ENCODE measurements at regions of chr14 and their contacts with region 1.

Region 1: DNA sequence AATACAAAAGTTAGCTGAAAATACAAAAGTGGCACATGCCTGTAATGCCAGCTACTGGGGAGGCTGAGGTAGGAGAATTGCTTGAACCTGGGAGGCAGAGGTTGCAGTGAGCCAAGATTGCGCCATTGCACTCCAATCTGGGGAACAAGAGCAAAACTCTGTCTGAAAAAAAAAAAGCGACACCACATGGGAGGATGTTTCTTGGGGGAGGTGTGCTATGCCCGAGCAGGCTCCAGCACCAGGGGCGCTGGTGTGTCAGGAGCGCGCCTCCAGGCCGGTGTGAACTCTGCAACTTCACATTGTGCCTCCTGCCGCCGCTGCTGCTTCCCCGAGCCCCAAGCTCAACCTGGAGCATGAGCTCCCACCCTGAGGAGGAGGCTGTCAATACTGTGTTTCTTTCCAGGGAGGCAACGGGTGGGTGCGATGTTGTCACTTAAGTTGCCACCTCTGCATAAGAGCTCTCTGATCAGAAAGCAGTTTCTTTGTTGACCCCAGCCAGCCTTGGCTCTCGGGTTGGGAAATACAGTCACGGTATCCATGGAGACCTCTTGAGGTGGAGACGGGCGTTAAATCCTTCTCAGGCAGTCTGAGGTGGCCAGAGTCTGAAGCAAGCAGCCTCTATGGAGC is 18.9 kb downstream of the DEGS2 start:
- DNase-seq: peak in 1 of 2 experiments; percentile 26
- ATAC-seq: peak in 1 of 2 experiments; percentile 51; a peak in 3 of 6 replicates
- H3K4me3 ChIP-seq: no peak overlapping the region
- H3K27ac ChIP-seq: no peak overlapping the region
- H3K4me1 ChIP-seq: peaks cover 8% of the 10 kb centered on the region; the same call in 1 of the 3 replicates
- CTCF ChIP-seq: no peak
- EP300 ChIP-seq: no peak
- POLR2A ChIP-seq: no peak
- RAD21 ChIP-seq: no peak

Region 2: GRCh38 chr14:100114109-100114765 is 26.3 kb before region 1 on chr14:
- CTCF ChIA-PET with region 1: interaction called, 11 read pairs
- POLR2A ChIA-PET with region 1: no interaction called
- DNase-seq: no peak
- ATAC-seq: no peak; a peak in 1 of 6 replicates
- H3K4me3 ChIP-seq: no peak overlapping the region
- H3K27ac ChIP-seq: no peak overlapping the region
- H3K4me1 ChIP-seq: no peaks in the 10 kb centered on the region
- CTCF ChIP-seq: no peak
- EP300 ChIP-seq: no peak
- POLR2A ChIP-seq: no peak
- RAD21 ChIP-seq: no peak

Region 3: GRCh38 chr14:100155042-100155846 is 14.7 kb after region 1 on chr14:
- CTCF ChIA-PET with region 1: interaction called, 20 read pairs
- POLR2A ChIA-PET with region 1: no interaction called
- DNase-seq: peak; percentile 62 to 70
- ATAC-seq: peak in 1 of 2 experiments; percentile 60; a peak in 3 of 6 replicates
- H3K4me3 ChIP-seq: no peak overlapping the region
- H3K27ac ChIP-seq: peak overlapping the region; percentile 40 to 52; a peak in 3 of 6 replicates
- H3K4me1 ChIP-seq: peaks cover 20% of the 10 kb centered on the region
- CTCF ChIP-seq: peak; percentile 31
- EP300 ChIP-seq: no peak
- POLR2A ChIP-seq: no peak
- RAD21 ChIP-seq: peak; percentile 11 to 38; a peak in 1 of 5 replicates

Region 4: DNA sequence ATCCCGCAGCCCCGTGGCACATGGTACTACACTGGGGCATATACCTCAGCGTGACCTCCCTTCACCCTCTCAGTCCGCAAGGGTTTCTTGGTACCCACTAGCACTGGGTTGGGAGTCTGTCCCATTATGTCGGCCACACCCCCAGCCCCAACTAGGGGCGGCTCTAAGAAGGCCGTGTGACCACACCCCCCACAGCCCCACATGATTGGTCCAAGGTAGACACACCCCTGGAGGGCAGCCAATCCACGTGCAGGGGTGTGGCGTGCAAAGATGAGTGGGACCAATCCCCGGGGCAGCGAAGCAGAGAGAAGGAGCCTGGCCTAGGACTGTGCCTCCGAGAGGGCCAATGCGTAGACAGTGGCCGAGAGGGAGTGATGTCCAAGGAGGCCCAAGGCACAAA is 481.2 kb after region 1 on chr14:
- CTCF ChIA-PET with region 1: no interaction called
- POLR2A ChIA-PET with region 1: no interaction called
- DNase-seq: peak in 1 of 2 experiments; percentile 33
- ATAC-seq: peak in 1 of 2 experiments; percentile 57; a peak in 3 of 6 replicates
- H3K4me3 ChIP-seq: no peak overlapping the region
- H3K27ac ChIP-seq: no peak overlapping the region
- H3K4me1 ChIP-seq: no peaks in the 10 kb centered on the region
- CTCF ChIP-seq: no peak
- EP300 ChIP-seq: no peak
- POLR2A ChIP-seq: no peak
- RAD21 ChIP-seq: no peak

Measured in A549 (cell line).